Mammary epithelial cell (primary cell): ENCODE measurements at regions of chr5 and their contacts with region 1.

Region 1: DNA sequence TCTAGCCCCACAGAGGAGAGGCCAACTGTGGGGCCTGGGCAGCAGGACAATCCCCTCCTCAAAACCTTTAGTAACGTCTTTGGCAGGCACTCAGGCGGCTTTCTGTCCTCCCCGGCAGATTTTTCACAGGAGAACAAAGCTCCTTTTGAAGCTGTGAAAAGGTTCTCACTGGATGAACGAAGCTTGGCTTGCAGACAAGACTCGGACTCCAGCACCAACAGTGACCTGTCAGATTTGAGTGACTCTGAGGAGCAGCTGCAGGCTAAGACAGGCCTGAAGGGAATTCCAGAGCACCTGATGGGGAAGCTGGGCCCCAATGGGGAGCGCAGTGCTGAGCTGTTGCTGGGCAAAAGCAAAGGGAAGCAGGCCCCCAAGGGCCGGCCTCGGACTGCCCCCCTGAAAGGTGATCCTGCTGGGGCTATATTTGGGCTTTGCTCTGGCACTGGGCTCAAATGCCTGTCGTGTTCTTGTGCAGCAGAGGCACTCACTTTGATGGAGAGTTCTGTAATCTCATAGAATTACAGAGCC is 39.4 kb downstream of the KDM3B start:
- DNase-seq: peak; percentile 43
- H3K4me3 ChIP-seq: no peak overlapping the region
- H3K27ac ChIP-seq: no peak overlapping the region
- H3K4me1 ChIP-seq: peaks cover 5% of the 10 kb centered on the region
- H3K27me3 ChIP-seq: no peaks in the 10 kb centered on the region
- CTCF ChIP-seq: no peak

Region 2: DNA sequence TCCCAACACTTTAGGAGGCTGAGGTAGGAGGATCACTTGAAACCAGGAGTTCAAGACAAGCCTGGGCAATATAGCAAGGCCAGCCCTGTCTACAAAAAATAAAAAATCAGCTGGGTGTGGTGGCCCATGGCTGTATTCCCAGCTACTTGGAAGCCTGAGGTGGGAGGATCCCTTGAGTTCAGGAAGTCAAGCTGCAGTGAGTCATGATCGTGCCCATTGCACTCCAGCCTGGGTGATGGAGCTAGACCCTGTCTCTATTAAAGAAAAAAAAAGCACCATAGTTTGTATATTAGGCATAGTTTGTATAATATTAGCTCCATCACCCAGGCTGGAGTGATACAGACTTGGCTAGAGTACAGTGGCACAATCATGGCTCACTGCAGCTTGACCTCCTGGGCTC is 243.1 kb before region 1 on chr5:
- CTCF ChIA-PET with region 1: interaction called, 10 read pairs
- dilution Hi-C with region 1: no loop called
- in situ Hi-C with region 1: no loop called
- intact Hi-C with region 1: no loop called
- DNase-seq: peak; percentile 75
- H3K4me3 ChIP-seq: no peak overlapping the region
- H3K27ac ChIP-seq: no peak overlapping the region
- H3K4me1 ChIP-seq: peaks cover 11% of the 10 kb centered on the region
- H3K27me3 ChIP-seq: no peaks in the 10 kb centered on the region
- CTCF ChIP-seq: no peak

Region 3: GRCh38 chr5:138316355-138316754 is 75.6 kb before region 1 on chr5:
- CTCF ChIA-PET with region 1: no interaction called
- dilution Hi-C with region 1: loop called (anchors 5 kb)
- in situ Hi-C with region 1: no loop called
- intact Hi-C with region 1: no loop called
- DNase-seq: no peak
- H3K4me3 ChIP-seq: no peak overlapping the region
- H3K27ac ChIP-seq: no peak overlapping the region
- H3K4me1 ChIP-seq: no peaks in the 10 kb centered on the region
- H3K27me3 ChIP-seq: no peaks in the 10 kb centered on the region
- CTCF ChIP-seq: no peak

Region 4: GRCh38 chr5:138438724-138439476 is 47.0 kb after region 1 on chr5 and contains the start of gene REEP2:
- CTCF ChIA-PET with region 1: no interaction called
- dilution Hi-C with region 1: loop called (anchors 5 kb)
- in situ Hi-C with region 1: no loop called
- intact Hi-C with region 1: no loop called
- DNase-seq: peak; percentile 43
- H3K4me3 ChIP-seq: peak within 1 kb of the TSS; percentile 39 to 48 (median 43)
- H3K27ac ChIP-seq: no peak within 1 kb of the TSS
- H3K4me1 ChIP-seq: peaks cover 16% of the 10 kb centered on the region
- H3K27me3 ChIP-seq: no peaks in the 10 kb centered on the region
- CTCF ChIP-seq: no peak
- total RNA-seq, gene REEP2: 14.5 to 26.5 TPM

Region 5: DNA sequence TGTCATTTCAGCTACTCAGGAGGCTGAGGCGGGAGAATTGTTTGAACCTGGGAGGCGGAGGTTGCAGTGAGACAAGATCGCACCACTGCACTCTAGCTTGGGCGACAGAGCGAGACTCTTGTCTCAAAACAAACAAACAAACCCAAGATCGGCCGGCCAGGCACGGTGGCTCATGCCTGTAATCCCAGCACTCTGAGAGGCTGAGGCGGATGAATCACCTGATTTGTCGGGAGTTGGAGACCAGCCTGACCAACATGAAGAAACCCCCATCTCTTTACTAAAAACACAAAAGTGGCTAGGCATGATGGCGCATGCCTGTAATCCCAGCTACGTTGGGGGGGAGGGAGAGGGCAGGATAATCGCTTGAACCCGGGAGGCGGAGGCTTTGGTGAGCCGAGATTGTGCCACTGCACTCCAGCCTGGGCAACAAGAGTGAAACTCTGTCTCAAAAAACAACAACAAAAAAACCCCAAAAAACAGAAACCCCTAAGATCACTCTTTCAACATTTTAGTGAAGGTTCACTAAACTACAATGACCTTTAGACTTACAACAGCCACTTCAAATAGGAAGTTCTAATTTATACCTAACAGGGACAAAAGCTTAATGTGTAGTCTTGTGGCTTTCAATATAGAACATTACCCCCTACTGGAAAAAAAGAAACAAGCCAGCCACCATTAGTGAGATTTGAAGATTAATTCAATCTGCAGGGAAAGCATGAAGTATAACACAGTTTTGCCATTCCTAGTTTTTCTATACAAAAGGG is 176.3 kb after region 1 on chr5:
- CTCF ChIA-PET with region 1: no interaction called
- dilution Hi-C with region 1: no loop called
- in situ Hi-C with region 1: no loop called
- intact Hi-C with region 1: no loop called
- DNase-seq: no peak
- H3K4me3 ChIP-seq: no peak overlapping the region
- H3K27ac ChIP-seq: no peak overlapping the region
- H3K4me1 ChIP-seq: no peaks in the 10 kb centered on the region
- H3K27me3 ChIP-seq: no peaks in the 10 kb centered on the region
- CTCF ChIP-seq: peak; percentile 3 to 15